Transverse colon (tissue), 4 donors: ENCODE measurements at regions of chr2 and their contacts with region 1.

Region 1: GRCh38 chr2:170177950-170178781 is at the start of gene MYO3B:
- DNase-seq: no peak
- H3K4me3 ChIP-seq: no peak within 1 kb of the TSS
- H3K27ac ChIP-seq: no peak within 1 kb of the TSS
- H3K4me1 ChIP-seq: no peaks in the 10 kb centered on the region
- H3K27me3 ChIP-seq: no peaks in the 10 kb centered on the region
- CTCF ChIP-seq: no peak
- EP300 ChIP-seq: no peak
- POLR2A ChIP-seq: no peak
- total RNA-seq, gene MYO3B: 0.48 TPM in 1 of 4 donors, not detected in the others

Region 2: DNA sequence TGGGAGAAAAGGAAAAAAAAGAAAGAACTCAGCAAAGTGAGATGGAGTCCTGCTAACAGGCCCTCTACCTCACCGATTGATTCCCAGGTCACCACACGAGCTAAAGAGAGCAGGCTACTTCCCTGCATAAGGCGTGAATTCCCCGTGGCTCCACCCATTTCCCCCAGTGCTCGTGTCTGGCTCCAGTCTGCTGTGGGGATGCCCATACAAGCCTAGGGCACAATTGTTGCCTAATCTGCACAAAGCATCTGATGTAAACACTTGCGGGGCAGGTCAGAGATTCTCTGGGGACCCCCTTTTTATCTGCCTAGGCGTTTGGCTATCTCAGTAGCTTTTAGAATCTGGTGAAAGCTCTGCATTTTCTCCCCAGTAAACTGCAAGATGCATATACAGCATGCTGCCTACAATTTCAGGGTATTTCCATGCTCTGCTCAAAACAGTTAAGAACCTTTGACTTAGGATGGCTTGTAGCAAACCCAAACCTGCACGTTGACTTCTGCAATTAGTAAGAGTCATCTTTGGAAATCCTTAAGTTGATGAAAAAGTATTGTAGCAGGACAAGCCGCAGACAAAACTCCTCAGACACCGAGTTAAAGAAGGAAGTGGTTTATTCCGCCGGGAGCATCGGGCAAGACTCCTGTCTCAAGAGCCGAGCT is 34.6 kb after region 1 on chr2:
- in situ Hi-C with region 1: no loop called
- intact Hi-C with region 1: no loop called
- DNase-seq: no peak
- H3K4me3 ChIP-seq: no peak overlapping the region
- H3K27ac ChIP-seq: no peak overlapping the region
- H3K4me1 ChIP-seq: no peaks in the 10 kb centered on the region
- H3K27me3 ChIP-seq: no peaks in the 10 kb centered on the region
- CTCF ChIP-seq: no peak
- EP300 ChIP-seq: no peak
- POLR2A ChIP-seq: no peak

Region 3: DNA sequence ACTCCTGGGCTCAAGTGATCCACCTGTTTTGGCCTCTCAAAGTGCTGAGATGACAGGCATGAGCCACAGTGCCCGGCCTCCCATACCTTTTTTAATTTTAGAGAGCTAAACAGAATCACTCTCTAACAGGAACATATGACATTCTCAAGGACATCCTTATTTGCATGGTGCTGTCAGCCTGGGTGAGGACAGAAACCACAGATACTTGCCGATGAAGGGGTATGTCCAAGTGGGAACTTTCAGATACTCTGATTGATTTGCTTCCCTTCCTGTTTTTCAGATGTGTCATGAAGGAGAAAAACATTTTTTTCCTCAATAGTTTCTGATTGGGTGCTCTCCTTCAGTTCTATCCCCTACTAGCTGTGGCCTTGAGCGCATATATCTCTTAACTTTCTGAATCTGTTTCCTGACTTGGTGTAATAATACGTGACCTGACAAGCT is 49.4 kb after region 1 on chr2:
- in situ Hi-C with region 1: no loop called
- intact Hi-C with region 1: loop called (anchors 1 kb)
- DNase-seq: no peak
- H3K4me3 ChIP-seq: no peak overlapping the region
- H3K27ac ChIP-seq: no peak overlapping the region
- H3K4me1 ChIP-seq: no peaks in the 10 kb centered on the region
- H3K27me3 ChIP-seq: no peaks in the 10 kb centered on the region
- CTCF ChIP-seq: no peak
- EP300 ChIP-seq: no peak
- POLR2A ChIP-seq: no peak